ENCODE measurements at regions of chr14 and their contacts with region 1.

Region 1: DNA sequence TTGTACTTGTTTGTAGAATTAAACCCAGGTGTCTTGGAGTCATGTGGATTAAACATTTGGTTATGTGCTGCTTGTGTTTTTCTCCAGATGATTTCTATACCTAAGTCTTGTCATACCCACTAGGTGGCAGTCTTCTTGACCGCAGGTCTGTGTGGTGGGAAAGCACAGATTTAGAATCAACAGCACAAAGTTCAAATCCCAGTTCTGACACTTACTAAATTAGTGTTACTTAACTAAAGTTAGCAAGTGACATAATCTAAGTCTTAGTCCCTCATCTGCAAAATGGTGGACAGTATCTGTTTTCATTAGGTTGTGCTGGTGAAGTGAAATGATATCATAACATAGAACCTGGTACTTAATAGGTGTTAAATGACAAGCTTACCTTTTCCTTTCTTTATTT is 151.0 kb upstream of the ARHGAP5 start:
- DNase-seq: no peak
- H3K4me3 ChIP-seq: no peak overlapping the region
- H3K27ac ChIP-seq: peak overlapping the region in 1 of 5 donors; percentile 24
- H3K4me1 ChIP-seq: peaks cover 0 to 18% of the 10 kb centered on the region in 2 donors
- H3K27me3 ChIP-seq: no peaks in the 10 kb centered on the region
- CTCF ChIP-seq: peak; percentile 23 to 54 (median 43)
- POLR2A ChIP-seq: no peak

Region 2: DNA sequence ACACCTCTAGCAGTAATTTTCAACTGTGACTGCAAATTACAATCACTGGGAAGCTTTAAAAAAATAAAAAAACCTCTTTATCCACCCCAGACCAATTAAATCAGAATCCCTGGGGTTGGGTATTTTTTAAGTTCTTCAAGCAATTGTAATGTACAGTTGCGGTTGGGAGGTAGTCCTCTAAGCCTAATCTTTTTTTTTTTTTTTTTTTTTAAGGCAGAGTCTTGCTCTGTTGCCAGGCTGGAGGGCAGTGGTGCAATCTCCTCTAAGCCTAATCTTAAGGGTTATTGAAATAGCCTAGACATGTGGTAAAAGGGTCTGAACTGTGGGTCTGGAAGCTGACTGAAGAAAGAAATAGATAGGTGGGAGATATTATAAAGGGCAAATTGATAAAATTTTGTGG is 633.5 kb after region 1 on chr14:
- intact Hi-C with region 1: loop called in 1 of 2 experiments (anchors 10 kb)
- DNase-seq: peak in 1 of 7 donors; percentile 11
- H3K4me3 ChIP-seq: no peak overlapping the region
- H3K27ac ChIP-seq: no peak overlapping the region
- H3K4me1 ChIP-seq: peaks cover 0 to 20% of the 10 kb centered on the region in 2 donors
- H3K27me3 ChIP-seq: no peaks in the 10 kb centered on the region
- CTCF ChIP-seq: no peak
- POLR2A ChIP-seq: no peak